Activated T-helper 2 cell treated with anti-CD3 and anti-CD28 coated beads, Interferon-gamma antibody, Interleukin-2, Interleukin-4, amounts not matched to agents 10 μg/mL and 5 μg/mL and 100 μg/mL, durations not matched to agents 14 hours and 24 hours and 36 hours (primary cell): ENCODE measurements at regions of chr7 and their contacts with region 1.

Region 1: GRCh38 chr7:149261829-149262617 is at the start of gene ZNF783:
- DNase-seq: peak; percentile 84
- H3K4me3 Mint-ChIP-seq: peak within 1 kb of the TSS; percentile 82
- H3K27ac Mint-ChIP-seq: peak within 1 kb of the TSS; percentile 93
- H3K4me1 Mint-ChIP-seq: peaks cover 27% of the 10 kb centered on the region
- H3K27me3 Mint-ChIP-seq: no peaks in the 10 kb centered on the region
- total RNA-seq, gene ZNF783: 25.0 and 26.8 TPM in 2 replicates

Region 2: DNA sequence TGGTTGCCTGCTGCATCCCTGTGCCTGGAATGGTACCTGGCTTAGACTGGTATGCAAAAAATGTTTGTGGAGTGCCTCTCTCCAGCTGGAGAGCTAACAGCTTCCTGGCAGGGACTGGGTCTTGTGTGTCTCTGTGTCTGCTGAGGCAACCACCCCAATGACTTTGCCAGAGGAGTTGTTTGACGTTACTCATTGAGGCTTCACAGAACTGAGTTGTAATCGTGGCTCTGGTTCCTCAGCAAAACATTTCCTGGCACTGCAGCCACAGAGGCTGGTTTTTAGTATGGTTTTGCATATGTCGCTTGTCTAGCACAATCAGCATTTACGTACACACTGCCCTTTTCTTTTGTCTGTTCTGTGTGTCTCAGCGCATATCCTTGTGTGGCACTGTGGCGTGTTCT is 59.2 kb before region 1 on chr7:
- intact Hi-C with region 1: no loop called
- DNase-seq: peak; percentile 26
- H3K4me3 Mint-ChIP-seq: peak overlapping the region; percentile 67
- H3K27ac Mint-ChIP-seq: peak overlapping the region; percentile 98
- H3K4me1 Mint-ChIP-seq: peaks cover 48% of the 10 kb centered on the region
- H3K27me3 Mint-ChIP-seq: no peaks in the 10 kb centered on the region

Region 3: GRCh38 chr7:149245244-149245643 is 16.8 kb before region 1 on chr7:
- intact Hi-C with region 1: loop called (anchors 1 kb)
- DNase-seq: no peak
- H3K4me3 Mint-ChIP-seq: peak overlapping the region; percentile 3
- H3K27ac Mint-ChIP-seq: peak overlapping the region; percentile 81
- H3K4me1 Mint-ChIP-seq: peaks cover 46% of the 10 kb centered on the region
- H3K27me3 Mint-ChIP-seq: no peaks in the 10 kb centered on the region

Region 4: DNA sequence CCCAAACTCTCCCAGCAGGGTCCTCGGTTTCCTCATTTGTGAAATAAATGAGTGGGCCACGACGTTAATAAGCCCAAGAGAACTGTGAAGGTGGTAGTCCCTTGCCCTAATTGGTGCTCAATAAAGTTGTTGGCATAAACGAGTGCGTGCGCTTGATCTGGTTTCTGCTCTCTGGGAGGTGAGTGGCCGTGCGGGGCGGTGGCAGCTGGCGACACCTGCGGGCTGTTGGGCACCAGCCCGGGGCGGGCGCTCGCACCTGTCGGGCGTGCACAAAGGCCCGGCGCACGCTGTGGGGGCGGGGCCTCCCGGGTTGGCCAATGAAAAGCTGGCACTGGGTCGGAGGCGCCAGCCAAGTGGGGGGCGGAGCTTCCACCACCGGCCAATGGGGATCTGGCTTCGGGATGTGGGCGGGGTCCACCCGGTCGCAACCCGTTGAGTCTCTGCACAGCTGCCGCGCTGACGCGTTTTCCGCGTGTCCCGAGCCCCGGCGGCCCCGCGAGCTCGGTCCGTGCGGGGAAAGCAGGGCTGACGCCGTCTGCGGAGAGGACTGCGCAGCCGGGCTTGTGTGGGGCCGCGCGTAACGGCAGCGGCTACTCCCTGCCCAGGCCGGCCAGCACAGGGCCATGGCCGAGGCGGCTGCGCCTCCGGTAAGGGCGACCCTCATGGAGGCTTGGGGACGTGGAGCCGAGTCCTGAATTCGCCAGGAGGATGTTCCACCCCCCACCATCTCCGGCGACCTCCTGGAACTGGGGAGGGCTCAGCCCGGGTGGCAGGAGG is 23.0 kb after region 1 on chr7:
- intact Hi-C with region 1: loop called (anchors 1 kb)
- DNase-seq: peak; percentile 98
- H3K4me3 Mint-ChIP-seq: peak overlapping the region; percentile 85
- H3K27ac Mint-ChIP-seq: no peak overlapping the region
- H3K4me1 Mint-ChIP-seq: peaks cover 24% of the 10 kb centered on the region
- H3K27me3 Mint-ChIP-seq: no peaks in the 10 kb centered on the region

Region 5: GRCh38 chr7:149422129-149422913 is 160.3 kb after region 1 on chr7:
- intact Hi-C with region 1: loop called (anchors 5 kb)
- DNase-seq: peak; percentile 68
- H3K4me3 Mint-ChIP-seq: peak overlapping the region; percentile 71
- H3K27ac Mint-ChIP-seq: peak overlapping the region; percentile 55
- H3K4me1 Mint-ChIP-seq: peaks cover 3% of the 10 kb centered on the region
- H3K27me3 Mint-ChIP-seq: peaks cover 5% of the 10 kb centered on the region